ENCODE measurements at regions of chr1 and their contacts with region 1.

Region 1: GRCh38 chr1:178300352-178300699 is 196.4 kb downstream of the CLEC20A start:
- DNase-seq: no peak
- ATAC-seq: no peak; a peak in 1 of 6 replicates
- H3K4me3 ChIP-seq: no peak overlapping the region
- H3K27ac ChIP-seq: 0 out of 6 replicates have a peak overlapping the region, but pooled peaks of 1 of the 2 experiments have one; percentile 8
- H3K4me1 ChIP-seq: 0 out of 3 replicates have a peak, but pooled peaks cover 3% of the 10 kb centered on the region
- CTCF ChIP-seq: no peak
- EP300 ChIP-seq: no peak
- POLR2A ChIP-seq: no peak
- RAD21 ChIP-seq: no peak

Region 2: DNA sequence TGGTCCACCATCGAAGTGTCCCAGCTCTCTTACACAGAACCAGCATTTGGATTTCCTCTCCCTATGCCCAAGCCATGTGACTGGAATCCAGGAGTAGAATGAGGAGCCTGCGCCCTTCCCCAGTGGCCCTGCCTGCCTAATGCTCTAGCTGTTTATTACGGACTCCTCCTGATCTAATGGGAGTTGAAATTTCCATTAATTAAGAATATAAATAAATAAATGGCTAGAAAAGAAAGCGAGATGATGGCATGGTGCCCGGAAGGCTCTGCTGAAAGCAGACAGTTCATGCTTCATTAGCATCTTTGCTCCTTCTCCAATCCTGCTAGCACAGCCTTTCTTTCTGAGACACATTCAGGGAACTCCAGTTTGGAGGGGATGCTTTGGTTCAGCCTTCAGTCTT is 546.7 kb before region 1 on chr1:
- CTCF ChIA-PET with region 1: no interaction called
- POLR2A ChIA-PET with region 1: no interaction called
- DNase-seq: no peak
- ATAC-seq: no peak
- H3K4me3 ChIP-seq: no peak overlapping the region
- H3K27ac ChIP-seq: no peak overlapping the region
- H3K4me1 ChIP-seq: no peaks in the 10 kb centered on the region
- CTCF ChIP-seq: no peak
- EP300 ChIP-seq: no peak
- POLR2A ChIP-seq: no peak
- RAD21 ChIP-seq: no peak

Region 3: DNA sequence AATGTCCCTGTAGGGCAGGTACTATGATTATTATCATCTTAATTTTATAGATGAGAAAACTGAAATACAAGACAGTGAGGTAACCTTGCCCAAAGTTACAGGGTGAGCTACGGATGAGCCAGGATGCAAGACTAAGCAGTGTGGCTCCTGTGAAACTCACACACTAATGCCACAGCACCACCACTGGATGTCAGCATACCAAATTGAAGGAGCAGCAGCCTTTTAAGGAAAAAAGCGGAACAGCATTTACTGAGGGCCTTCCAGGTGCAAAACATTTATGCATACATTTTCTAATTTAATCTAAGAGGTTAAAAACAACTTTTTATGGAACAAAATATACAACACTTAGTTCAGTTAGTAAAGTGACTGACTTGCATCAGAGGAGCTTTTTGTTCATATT is 372.1 kb before region 1 on chr1:
- CTCF ChIA-PET with region 1: no interaction called
- POLR2A ChIA-PET with region 1: no interaction called
- DNase-seq: no peak
- ATAC-seq: no peak
- H3K4me3 ChIP-seq: no peak overlapping the region
- H3K27ac ChIP-seq: no peak overlapping the region
- H3K4me1 ChIP-seq: peaks cover 9% of the 10 kb centered on the region; the same call in 1 of the 3 replicates
- CTCF ChIP-seq: no peak
- EP300 ChIP-seq: no peak
- POLR2A ChIP-seq: no peak
- RAD21 ChIP-seq: no peak

Region 4: GRCh38 chr1:178209935-178210334 is 90.4 kb before region 1 on chr1:
- CTCF ChIA-PET with region 1: no interaction called
- POLR2A ChIA-PET with region 1: no interaction called
- DNase-seq: no peak
- ATAC-seq: no peak
- H3K4me3 ChIP-seq: no peak overlapping the region
- H3K27ac ChIP-seq: no peak overlapping the region
- H3K4me1 ChIP-seq: no peaks in the 10 kb centered on the region
- CTCF ChIP-seq: no peak
- EP300 ChIP-seq: no peak
- POLR2A ChIP-seq: no peak
- RAD21 ChIP-seq: no peak

Region 5: GRCh38 chr1:178273707-178274410 is 26.5 kb before region 1 on chr1:
- CTCF ChIA-PET with region 1: interaction called, 10 read pairs
- POLR2A ChIA-PET with region 1: no interaction called
- DNase-seq: no peak
- ATAC-seq: no peak
- H3K4me3 ChIP-seq: no peak overlapping the region
- H3K27ac ChIP-seq: peak overlapping the region in 1 of 2 experiments; percentile 22; a peak in 1 of 6 replicates
- H3K4me1 ChIP-seq: peaks cover 14% of the 10 kb centered on the region; the same call in 2 of the 3 replicates
- CTCF ChIP-seq: no peak
- EP300 ChIP-seq: no peak
- POLR2A ChIP-seq: no peak
- RAD21 ChIP-seq: no peak

Region 6: GRCh38 chr1:178282949-178283367 is 17.4 kb before region 1 on chr1:
- CTCF ChIA-PET with region 1: interaction called, 21 read pairs
- POLR2A ChIA-PET with region 1: no interaction called
- DNase-seq: peak; percentile 40 to 71
- ATAC-seq: peak; percentile 82 to 86; a peak in 5 of 6 replicates
- H3K4me3 ChIP-seq: no peak overlapping the region
- H3K27ac ChIP-seq: no peak overlapping the region
- H3K4me1 ChIP-seq: peaks cover 13% of the 10 kb centered on the region; the same call in 2 of the 3 replicates
- CTCF ChIP-seq: peak; percentile 86
- EP300 ChIP-seq: no peak
- POLR2A ChIP-seq: no peak
- RAD21 ChIP-seq: peak; percentile 78 to 89

Region 7: DNA sequence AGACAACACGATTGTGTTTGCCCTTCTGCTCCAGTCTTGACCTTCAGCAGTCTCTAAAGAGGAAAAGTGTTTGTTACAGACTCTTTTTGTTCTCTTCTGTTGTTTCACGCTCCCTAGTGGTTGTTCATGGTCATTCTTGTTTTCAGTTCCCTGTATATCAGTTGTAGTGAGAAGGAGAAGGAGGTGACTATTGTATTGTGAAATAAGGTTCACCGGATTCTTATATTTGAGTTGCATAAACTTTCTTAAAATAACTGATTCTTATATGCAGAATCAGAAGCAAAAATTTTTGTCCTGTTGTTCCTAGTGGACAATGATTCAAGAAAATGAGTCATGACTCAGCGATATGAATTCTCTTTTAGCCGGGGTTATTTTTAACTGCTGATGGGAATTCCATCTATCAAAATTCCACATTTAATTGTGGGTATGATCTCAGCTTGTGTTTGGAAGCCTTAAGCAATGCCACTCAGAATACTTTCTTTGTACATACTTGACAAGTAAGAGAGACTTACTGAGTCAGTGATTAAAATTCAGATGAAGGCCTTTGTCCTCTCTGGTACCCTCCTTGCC is 44.3 kb after region 1 on chr1:
- CTCF ChIA-PET with region 1: interaction called, 10 read pairs
- POLR2A ChIA-PET with region 1: no interaction called
- DNase-seq: peak; percentile 17 to 62
- ATAC-seq: peak; percentile 89 to 94
- H3K4me3 ChIP-seq: no peak overlapping the region
- H3K27ac ChIP-seq: peak overlapping the region; percentile 30 to 63; a peak in 4 of 6 replicates
- H3K4me1 ChIP-seq: peaks cover 29% of the 10 kb centered on the region
- CTCF ChIP-seq: peak; percentile 62
- EP300 ChIP-seq: no peak
- POLR2A ChIP-seq: no peak
- RAD21 ChIP-seq: peak; percentile 41 to 54; a peak in 4 of 5 replicates

Region 8: GRCh38 chr1:178672434-178672833 is 372.1 kb after region 1 on chr1:
- CTCF ChIA-PET with region 1: no interaction called
- POLR2A ChIA-PET with region 1: no interaction called
- DNase-seq: no peak
- ATAC-seq: no peak
- H3K4me3 ChIP-seq: no peak overlapping the region
- H3K27ac ChIP-seq: no peak overlapping the region
- H3K4me1 ChIP-seq: no peaks in the 10 kb centered on the region
- CTCF ChIP-seq: no peak
- EP300 ChIP-seq: no peak
- POLR2A ChIP-seq: no peak
- RAD21 ChIP-seq: no peak